Right cardiac atrium (tissue), 5 donors: ENCODE measurements at regions of chr4 and their contacts with region 1.

Region 1: GRCh38 chr4:142126890-142127497 is 490.6 kb downstream of the IL15 start:
- DNase-seq: peak in 2 of 3 donors; percentile 15 to 30
- ATAC-seq: peak; percentile 30 to 49
- H3K4me3 ChIP-seq: no peak overlapping the region
- H3K27ac ChIP-seq: no peak overlapping the region
- H3K4me1 ChIP-seq: no peaks in the 10 kb centered on the region
- H3K27me3 ChIP-seq: no peaks in the 10 kb centered on the region

Region 2: DNA sequence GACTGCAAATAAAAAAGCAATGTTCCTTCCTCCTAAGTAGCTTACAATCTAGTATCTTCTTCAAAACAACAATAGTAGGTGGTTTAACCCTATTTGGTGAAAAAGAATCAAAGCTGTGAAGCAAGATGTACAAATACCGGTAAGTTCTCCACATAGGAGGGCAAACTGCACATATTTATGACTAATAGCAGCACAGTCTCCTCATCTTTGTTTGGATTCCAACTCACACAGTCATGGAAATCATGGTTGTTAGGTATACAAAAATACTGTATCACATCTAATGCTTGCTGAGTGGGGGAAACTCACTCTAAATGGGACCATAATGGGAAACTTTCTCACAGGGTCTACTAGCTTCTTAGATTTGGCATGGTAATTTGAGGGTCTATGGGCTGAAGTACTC is 122.0 kb after region 1 on chr4:
- intact Hi-C with region 1: no loop called
- DNase-seq: no peak
- ATAC-seq: no peak
- H3K4me3 ChIP-seq: no peak overlapping the region
- H3K27ac ChIP-seq: no peak overlapping the region
- H3K4me1 ChIP-seq: no peaks in the 10 kb centered on the region
- H3K27me3 ChIP-seq: no peaks in the 10 kb centered on the region

Region 3: GRCh38 chr4:142353149-142353738 is 226.2 kb after region 1 on chr4:
- intact Hi-C with region 1: loop called in 1 of 4 experiments (anchors 10 kb)
- DNase-seq: no peak
- ATAC-seq: peak; percentile 49 to 65
- H3K4me3 ChIP-seq: no peak overlapping the region
- H3K27ac ChIP-seq: no peak overlapping the region
- H3K4me1 ChIP-seq: peaks cover 4% of the 10 kb centered on the region
- H3K27me3 ChIP-seq: no peaks in the 10 kb centered on the region

Region 4: GRCh38 chr4:142719854-142720541 is 593.0 kb after region 1 on chr4:
- intact Hi-C with region 1: loop called in 1 of 4 experiments (anchors 10 kb)
- DNase-seq: no peak
- ATAC-seq: no peak
- H3K4me3 ChIP-seq: no peak overlapping the region
- H3K27ac ChIP-seq: no peak overlapping the region
- H3K4me1 ChIP-seq: no peaks in the 10 kb centered on the region
- H3K27me3 ChIP-seq: no peaks in the 10 kb centered on the region

Region 5: DNA sequence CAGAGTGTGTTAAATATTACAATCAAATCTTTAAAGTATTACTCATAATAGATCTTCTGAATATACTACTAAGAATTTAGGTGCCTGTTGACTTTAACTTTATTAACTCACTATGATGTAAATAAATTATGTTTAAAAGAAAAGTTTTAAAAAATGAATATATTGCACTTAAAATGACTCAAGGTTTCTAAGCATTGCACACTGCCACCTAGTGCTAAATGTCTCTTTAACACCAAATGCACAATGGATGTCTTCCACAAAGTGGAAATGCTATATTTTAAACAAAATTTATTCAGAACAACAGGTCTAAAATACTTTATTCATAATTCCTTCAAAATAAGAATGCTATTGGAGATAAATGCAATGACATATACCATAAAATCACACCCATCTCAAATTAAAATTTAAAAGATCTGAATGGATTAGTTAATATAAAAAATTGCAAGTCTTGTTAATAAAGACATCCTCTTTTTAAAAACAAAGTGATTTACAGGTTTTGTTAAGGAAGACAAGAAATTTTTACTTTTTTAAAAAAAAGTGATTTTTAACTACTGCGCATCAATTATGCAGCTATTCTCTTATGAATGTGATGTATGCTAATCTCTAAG is 713.6 kb after region 1 on chr4:
- intact Hi-C with region 1: loop called in 3 of 4 experiments (anchors 5 to 10 kb)
- DNase-seq: no peak
- ATAC-seq: no peak
- H3K4me3 ChIP-seq: no peak overlapping the region
- H3K27ac ChIP-seq: no peak overlapping the region
- H3K4me1 ChIP-seq: no peaks in the 10 kb centered on the region
- H3K27me3 ChIP-seq: no peaks in the 10 kb centered on the region

Region 6: DNA sequence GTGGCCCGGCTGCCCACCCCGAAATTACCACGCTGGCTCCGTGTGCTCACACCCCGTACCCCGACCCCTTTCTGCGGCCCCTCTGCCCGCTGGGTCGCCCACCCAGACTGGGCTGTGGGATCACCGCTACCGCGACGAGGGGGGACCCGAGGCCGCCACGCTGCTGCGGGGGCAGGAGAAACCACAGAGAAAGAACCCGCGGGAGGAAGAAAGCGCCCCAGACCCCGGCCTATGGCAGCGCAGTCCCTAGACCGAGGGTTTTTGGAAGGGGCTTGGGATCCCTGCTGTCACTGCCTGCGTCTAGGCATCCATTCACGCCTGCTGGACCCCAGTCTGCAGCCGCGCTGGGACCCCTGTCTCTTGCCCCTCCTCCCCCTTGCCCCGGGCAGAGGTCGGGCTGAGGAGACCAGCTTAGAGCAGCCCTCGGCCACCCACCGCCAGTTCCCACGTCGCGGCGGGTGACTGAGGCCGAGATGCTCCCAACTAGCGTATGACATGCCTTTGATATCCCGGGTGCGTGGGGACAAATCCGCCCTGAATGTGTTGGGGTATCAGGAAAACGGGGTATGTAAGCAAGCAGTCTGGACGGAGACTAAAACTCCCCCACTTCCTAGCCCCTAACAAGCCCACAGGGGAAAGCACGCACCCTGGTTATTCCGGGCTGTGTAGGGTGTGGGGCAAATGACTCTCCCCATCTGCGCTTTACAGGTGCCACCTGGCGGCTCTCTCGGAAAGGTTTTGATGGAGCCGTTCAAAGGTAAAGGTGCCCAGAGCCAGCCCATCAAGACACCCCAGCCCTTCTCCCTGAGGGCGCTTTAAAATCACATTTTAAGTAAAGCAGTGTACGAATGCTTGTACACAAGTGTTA is 720.0 kb after region 1 on chr4:
- intact Hi-C with region 1: loop called in 3 of 4 experiments (anchors 5 to 10 kb)
- DNase-seq: peak in 2 of 3 donors; percentile 45 to 59
- ATAC-seq: peak; percentile 68 to 73
- H3K4me3 ChIP-seq: peak overlapping the region; percentile 72
- H3K27ac ChIP-seq: peak overlapping the region; percentile 22
- H3K4me1 ChIP-seq: no peaks in the 10 kb centered on the region
- H3K27me3 ChIP-seq: no peaks in the 10 kb centered on the region